Activated B cell treated with CpG ODN at 0.5 μM for 24 hours (primary cell): ENCODE measurements at regions of chr18 and their contacts with region 1.

Region 1: GRCh38 chr18:47175908-47176575 is at the start of gene IER3IP1:
- DNase-seq: peak; percentile 86
- ATAC-seq: peak; percentile 97
- H3K4me3 Mint-ChIP-seq: no peak within 1 kb of the TSS
- H3K27ac Mint-ChIP-seq: peak within 1 kb of the TSS; percentile 73
- H3K4me1 Mint-ChIP-seq: peaks cover 2% of the 10 kb centered on the region
- H3K27me3 Mint-ChIP-seq: peaks cover 6% of the 10 kb centered on the region
- CTCF ChIP-seq: no peak
- total RNA-seq, gene IER3IP1: 8.6 and 8.8 TPM in 2 replicates

Region 2: DNA sequence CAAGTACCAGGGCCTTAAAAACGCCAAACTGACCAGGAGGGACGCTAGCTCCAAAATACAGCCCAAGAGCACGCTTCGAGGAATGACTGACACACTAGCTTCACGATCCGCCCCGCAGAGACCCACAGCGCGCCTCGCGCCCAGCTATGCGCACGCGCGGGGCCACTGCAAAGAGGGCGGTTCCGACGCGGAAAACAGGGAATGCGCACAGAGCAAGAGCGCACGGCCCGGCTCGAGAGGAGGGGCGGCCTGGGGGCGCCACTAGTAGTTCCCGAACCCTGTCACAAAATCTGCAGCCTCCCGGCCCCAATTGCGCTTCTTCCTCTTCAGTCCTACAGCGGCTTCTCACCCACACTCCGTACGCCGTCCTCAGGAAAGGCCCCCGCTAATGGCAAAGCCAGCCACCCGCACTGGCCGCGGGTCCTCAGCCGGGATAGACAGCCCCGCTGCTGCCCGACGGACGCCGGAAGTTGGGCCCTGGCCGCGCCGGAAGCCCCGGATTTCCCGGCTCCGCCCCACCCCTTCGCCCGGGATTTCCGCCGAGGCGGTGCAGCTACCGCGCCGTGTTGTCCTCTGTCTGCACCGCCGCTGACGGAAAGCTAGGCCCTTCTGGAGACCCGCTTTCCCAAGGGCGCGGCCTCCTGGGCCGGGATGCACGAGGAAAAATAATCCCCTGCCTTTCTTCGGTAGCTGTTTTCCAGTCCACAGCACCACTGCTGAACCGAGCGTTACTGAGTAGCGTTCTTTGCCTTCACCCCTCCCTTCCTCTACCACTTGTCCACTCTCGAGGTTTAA is 25.8 kb before region 1 on chr18 and contains the start of gene HDHD2:
- CTCF ChIA-PET with region 1: no interaction called
- POLR2A ChIA-PET with region 1: interaction called, 8 read pairs
- intact Hi-C with region 1: loop called (anchors 1 kb)
- DNase-seq: peak; percentile 75
- ATAC-seq: peak; percentile 83
- H3K4me3 Mint-ChIP-seq: peak within 1 kb of the TSS; percentile 92
- H3K27ac Mint-ChIP-seq: peak within 1 kb of the TSS; percentile 84
- H3K4me1 Mint-ChIP-seq: peaks cover 30% of the 10 kb centered on the region
- H3K27me3 Mint-ChIP-seq: no peaks in the 10 kb centered on the region
- CTCF ChIP-seq: no peak
- total RNA-seq, gene HDHD2: 36.6 and 38.8 TPM in 2 replicates

Region 3: DNA sequence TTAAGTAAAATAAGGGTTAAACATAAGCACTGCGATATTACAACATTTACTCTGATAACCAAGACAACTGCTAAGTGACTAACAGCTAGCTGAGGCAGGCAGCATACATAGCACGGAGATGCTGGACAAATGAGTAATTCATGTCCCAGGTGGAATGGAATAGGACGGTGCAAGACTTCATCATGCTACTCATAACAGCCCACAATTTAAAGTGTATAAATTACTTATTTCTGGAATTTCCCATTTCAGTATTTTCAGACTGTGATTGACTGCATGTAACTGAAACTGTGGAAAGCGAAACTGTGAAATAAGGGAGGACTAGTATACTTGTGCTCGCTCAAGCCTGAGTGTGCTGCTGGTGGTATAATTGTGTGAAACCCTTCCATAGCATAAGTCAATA is 12.8 kb before region 1 on chr18:
- CTCF ChIA-PET with region 1: no interaction called
- POLR2A ChIA-PET with region 1: no interaction called
- intact Hi-C with region 1: loop called (anchors 1 kb)
- DNase-seq: no peak
- ATAC-seq: peak; percentile 86
- H3K4me3 Mint-ChIP-seq: no peak overlapping the region
- H3K27ac Mint-ChIP-seq: no peak overlapping the region
- H3K4me1 Mint-ChIP-seq: peaks cover 22% of the 10 kb centered on the region
- H3K27me3 Mint-ChIP-seq: no peaks in the 10 kb centered on the region
- CTCF ChIP-seq: no peak